Psoas muscle (tissue), 8 donors: ENCODE measurements at regions of chr3 and their contacts with region 1.

Region 1: GRCh38 chr3:9422712-9423424 is 25.5 kb downstream of the SETD5 start:
- DNase-seq: peak; percentile 54 to 65
- ATAC-seq: peak; percentile 90 to 93 (median 92)
- H3K4me3 ChIP-seq: peak overlapping the region; percentile 27
- H3K27ac ChIP-seq: peak overlapping the region; percentile 77
- H3K4me1 ChIP-seq: peaks cover 66% of the 10 kb centered on the region
- H3K27me3 ChIP-seq: no peaks in the 10 kb centered on the region
- CTCF ChIP-seq: peak; percentile 63

Region 2: DNA sequence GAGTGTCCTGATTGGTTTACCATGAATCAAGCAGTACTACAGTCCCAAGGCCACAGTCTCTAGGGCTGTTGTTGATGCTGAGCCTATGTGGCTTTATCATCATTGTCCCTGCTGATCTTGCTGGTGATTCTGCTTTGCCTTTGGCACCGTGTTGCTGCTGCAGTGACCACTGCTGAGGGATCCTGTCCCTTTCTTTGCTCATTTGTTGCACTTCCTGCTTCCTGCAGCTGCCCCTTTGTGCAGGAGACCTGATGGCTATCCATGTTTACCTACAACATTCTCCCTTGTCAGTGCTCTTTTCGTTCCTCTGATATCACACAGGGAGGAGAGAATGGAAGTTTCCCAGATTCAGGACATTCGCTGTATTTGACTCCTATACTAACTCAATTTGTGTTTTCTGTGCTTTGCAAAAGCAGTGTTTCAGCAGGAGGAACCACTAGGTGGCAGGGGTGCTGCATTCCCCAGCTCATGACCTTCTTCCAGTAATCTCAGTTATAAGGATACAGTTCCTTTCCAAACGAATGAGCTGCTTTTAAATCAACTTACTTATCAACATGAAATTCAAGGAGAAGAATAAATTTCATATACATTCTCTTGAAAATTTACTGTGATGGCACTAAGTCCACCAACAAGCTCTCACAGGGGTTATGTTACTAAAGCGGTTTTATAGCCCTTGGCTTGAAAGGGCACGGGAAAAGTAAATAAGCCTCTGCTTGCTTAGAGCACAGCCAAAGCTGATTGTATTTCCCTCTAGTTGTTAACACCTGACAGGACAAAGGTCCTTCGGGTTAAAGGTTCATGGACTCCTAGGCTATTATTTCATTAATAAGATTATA is 69.7 kb before region 1 on chr3:
- intact Hi-C with region 1: loop called in 1 of 2 experiments (anchors 2 kb)
- DNase-seq: peak; percentile 54 to 79
- ATAC-seq: peak; percentile 74 to 95 (median 84)
- H3K4me3 ChIP-seq: no peak overlapping the region
- H3K27ac ChIP-seq: no peak overlapping the region
- H3K4me1 ChIP-seq: peaks cover 10% of the 10 kb centered on the region
- H3K27me3 ChIP-seq: no peaks in the 10 kb centered on the region
- CTCF ChIP-seq: peak; percentile 90

Region 3: DNA sequence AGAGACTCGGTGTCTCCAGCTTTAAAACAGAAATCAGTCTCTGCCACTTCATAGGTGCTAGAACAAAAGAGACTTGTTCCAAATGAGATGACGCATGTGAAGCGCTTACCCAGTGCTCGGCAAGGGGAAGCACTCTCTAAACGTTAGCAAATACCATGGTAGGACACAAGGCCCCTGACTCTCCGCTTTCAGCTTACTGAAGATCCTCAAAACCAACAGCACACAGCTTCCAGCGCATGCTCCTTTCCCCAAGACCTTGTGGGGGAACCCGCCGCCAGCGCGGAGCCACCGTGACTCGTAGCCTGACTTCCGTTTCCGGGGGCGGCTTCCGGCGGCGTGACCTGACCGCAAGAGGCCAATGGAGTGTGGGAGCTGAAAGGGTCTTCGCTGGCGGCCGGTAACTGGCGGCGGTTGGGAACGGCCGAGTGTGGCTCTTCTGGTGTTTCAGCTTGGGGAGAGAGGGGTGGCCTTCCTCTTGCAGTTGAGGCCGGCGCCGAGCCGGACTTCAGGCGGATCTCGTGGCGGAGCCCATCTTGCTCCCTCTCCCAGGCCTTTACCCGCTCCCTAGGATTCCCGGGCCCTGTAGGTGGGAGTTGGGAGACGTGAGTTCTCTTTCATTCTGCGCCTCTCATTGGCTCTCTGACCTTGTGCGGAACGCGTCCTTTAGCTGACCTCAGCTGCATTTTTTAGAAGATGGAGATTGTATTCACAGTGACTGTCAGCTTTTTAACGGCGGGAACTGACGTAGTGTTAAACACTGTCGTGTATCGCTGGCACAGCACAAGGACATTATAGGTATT is 59.9 kb before region 1 on chr3 and contains the start of gene THUMPD3:
- intact Hi-C with region 1: loop called in 1 of 2 experiments (anchors 5 kb)
- DNase-seq: peak; percentile 94 to 96
- ATAC-seq: peak; percentile 98 to 100 (median 99)
- H3K4me3 ChIP-seq: peak within 1 kb of the TSS; percentile 82
- H3K27ac ChIP-seq: peak within 1 kb of the TSS; percentile 92
- H3K4me1 ChIP-seq: peaks cover 22% of the 10 kb centered on the region
- H3K27me3 ChIP-seq: no peaks in the 10 kb centered on the region
- CTCF ChIP-seq: no peak
- total RNA-seq, gene THUMPD3: 40.0 to 57.7 (median 52.9) TPM

Region 4: GRCh38 chr3:9396700-9397521 is 26.0 kb before region 1 on chr3:
- intact Hi-C with region 1: loop called in 1 of 2 experiments (anchors 2 kb)
- DNase-seq: peak; percentile 99 to 100
- ATAC-seq: peak; percentile 81 to 85 (median 82)
- H3K4me3 ChIP-seq: peak overlapping the region; percentile 96
- H3K27ac ChIP-seq: peak overlapping the region; percentile 100
- H3K4me1 ChIP-seq: peaks cover 64% of the 10 kb centered on the region
- H3K27me3 ChIP-seq: no peaks in the 10 kb centered on the region
- CTCF ChIP-seq: no peak

Region 5: DNA sequence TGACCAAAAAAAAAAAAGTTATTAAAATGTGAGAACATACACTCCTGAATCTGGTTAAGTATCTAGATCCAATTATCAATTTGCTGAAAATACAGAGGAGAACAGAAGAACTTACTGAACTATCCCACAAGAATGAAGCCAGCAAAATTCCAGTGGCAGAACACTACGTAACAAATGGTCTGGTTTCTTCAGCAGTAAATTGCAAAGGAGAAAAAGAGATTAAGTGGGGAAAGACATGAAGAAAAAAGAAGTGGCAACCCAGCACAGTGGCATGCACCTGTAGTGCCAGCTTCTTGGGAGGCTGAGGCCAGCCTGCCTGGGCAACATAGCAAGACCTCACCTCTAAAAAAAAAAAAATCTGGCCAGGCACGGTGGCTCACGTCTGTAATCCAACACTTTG is 68.6 kb after region 1 on chr3:
- intact Hi-C with region 1: no loop called
- DNase-seq: no peak
- ATAC-seq: no peak
- H3K4me3 ChIP-seq: no peak overlapping the region
- H3K27ac ChIP-seq: no peak overlapping the region
- H3K4me1 ChIP-seq: no peaks in the 10 kb centered on the region
- H3K27me3 ChIP-seq: no peaks in the 10 kb centered on the region
- CTCF ChIP-seq: no peak

Region 6: GRCh38 chr3:9569054-9569453 is 146.2 kb after region 1 on chr3:
- intact Hi-C with region 1: no loop called
- DNase-seq: no peak
- ATAC-seq: no peak
- H3K4me3 ChIP-seq: no peak overlapping the region
- H3K27ac ChIP-seq: no peak overlapping the region
- H3K4me1 ChIP-seq: no peaks in the 10 kb centered on the region
- H3K27me3 ChIP-seq: peaks cover 0 to 4% (median 0%) of the 10 kb centered on the region in 3 donors
- CTCF ChIP-seq: no peak